H1 (cell line): ENCODE measurements at regions of chr19 and their contacts with region 1.

Region 1: GRCh38 chr19:10230861-10231611 is at the start of gene S1PR2:
- DNase-seq: peak in 1 of 2 experiments; percentile 87
- H3K4me3 ChIP-seq: peak within 1 kb of the TSS; percentile 61 to 88 (median 78)
- H3K27ac ChIP-seq: peak within 1 kb of the TSS; percentile 83
- H3K4me1 ChIP-seq: peaks cover 3 to 7% (median 3%) of the 10 kb centered on the region in 4 experiments; a peak in 4 of 7 replicates
- H3K27me3 ChIP-seq: 0 out of 7 replicates have a peak, but pooled peaks cover 0 to 3% (median 0%) of the 10 kb centered on the region in 4 experiments
- CTCF ChIP-seq: no peak
- EP300 ChIP-seq: no peak
- POLR2A ChIP-seq: peak; percentile 43 to 52
- RAD21 ChIP-seq: no peak
- total RNA-seq, gene S1PR2: 18.7 and 19.4 TPM in 2 replicates

Region 2: GRCh38 chr19:10122045-10122444 is 109.0 kb before region 1 on chr19:
- CTCF ChIA-PET with region 1: no interaction called
- POLR2A ChIA-PET with region 1: no interaction called
- DNase-seq: no peak
- H3K4me3 ChIP-seq: no peak overlapping the region
- H3K27ac ChIP-seq: no peak overlapping the region
- H3K4me1 ChIP-seq: peaks cover 0 to 7% (median 1%) of the 10 kb centered on the region in 4 experiments; a peak in 2 of 7 replicates
- H3K27me3 ChIP-seq: no peaks in the 10 kb centered on the region
- CTCF ChIP-seq: no peak
- EP300 ChIP-seq: no peak
- POLR2A ChIP-seq: no peak
- RAD21 ChIP-seq: no peak

Region 3: DNA sequence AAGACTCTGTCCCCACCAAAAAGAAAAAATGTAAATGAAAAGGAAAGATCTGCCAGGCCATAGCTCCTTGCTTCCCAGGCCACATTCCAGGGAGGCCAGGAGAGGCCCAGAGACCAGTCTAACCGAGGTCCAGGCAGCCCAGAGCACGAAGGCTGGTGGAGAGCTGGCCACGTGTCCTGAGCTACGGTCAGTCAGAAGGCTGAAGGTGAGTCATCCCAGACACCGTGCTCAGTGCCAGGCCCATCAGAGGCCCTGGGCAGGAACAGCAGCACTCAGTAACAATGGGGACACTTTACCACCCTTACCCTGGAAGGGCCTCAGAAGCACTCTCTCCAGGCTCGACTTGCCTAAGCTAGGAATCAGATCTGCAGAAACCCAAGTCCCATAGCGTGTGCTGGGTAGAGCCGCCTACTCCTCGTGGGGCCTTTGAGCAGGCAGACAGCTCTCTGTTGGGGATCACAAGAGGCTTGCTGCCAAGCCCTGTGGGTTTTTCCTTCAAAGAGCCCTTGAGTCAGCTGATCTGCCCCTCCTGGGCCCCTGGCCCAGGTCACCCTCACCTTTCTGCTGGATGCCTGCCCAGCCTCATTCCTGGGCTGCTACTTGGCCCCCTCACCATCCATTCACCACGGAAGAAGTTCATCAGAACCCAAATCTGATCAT is 24.7 kb before region 1 on chr19:
- CTCF ChIA-PET with region 1: interaction called, 59 read pairs
- POLR2A ChIA-PET with region 1: interaction called, 6 read pairs
- DNase-seq: no peak
- H3K4me3 ChIP-seq: no peak overlapping the region
- H3K27ac ChIP-seq: no peak overlapping the region
- H3K4me1 ChIP-seq: peaks cover 0 to 3% (median 0%) of the 10 kb centered on the region in 4 experiments; a peak in 1 of 7 replicates
- H3K27me3 ChIP-seq: no peaks in the 10 kb centered on the region
- CTCF ChIP-seq: no peak
- EP300 ChIP-seq: no peak
- POLR2A ChIP-seq: no peak
- RAD21 ChIP-seq: no peak

Region 4: DNA sequence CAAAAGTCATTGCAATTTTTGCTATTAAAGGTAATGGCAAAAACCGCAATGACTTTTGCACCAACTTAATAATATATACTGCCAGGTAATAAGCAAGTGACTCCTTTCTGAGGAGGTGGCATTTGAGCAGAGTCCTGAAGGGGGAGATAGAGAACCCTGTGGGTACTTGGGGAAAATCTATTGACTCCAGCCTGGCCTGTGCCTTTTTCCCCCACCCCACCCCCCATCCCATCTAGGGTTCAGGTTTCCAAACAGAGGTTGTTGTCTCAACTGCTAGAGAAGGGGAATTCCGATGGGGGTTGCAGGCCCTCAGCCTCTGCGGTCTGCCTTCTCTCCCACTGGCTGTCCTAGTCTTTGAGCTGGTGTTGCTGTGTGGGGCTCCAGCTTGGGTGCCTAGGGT is 11.4 kb before region 1 on chr19:
- CTCF ChIA-PET with region 1: interaction called, 51 read pairs
- POLR2A ChIA-PET with region 1: interaction called, 5 read pairs
- DNase-seq: peak in 1 of 2 experiments; percentile 46
- H3K4me3 ChIP-seq: no peak overlapping the region; a peak in 1 of 8 replicates
- H3K27ac ChIP-seq: peak overlapping the region; percentile 29; the same call in 1 of the 2 replicates
- H3K4me1 ChIP-seq: peaks cover 0 to 2% (median 0%) of the 10 kb centered on the region in 4 experiments; a peak in 2 of 7 replicates
- H3K27me3 ChIP-seq: no peaks in the 10 kb centered on the region
- CTCF ChIP-seq: peak; percentile 24 to 64 (median 56)
- EP300 ChIP-seq: peak; percentile 54 to 80; a peak in 2 of 3 replicates
- POLR2A ChIP-seq: peak in 1 of 2 experiments; percentile 63; a peak in 1 of 3 replicates
- RAD21 ChIP-seq: peak; percentile 38 to 55

Region 5: GRCh38 chr19:10245189-10245939 is 14.3 kb after region 1 on chr19:
- CTCF ChIA-PET with region 1: interaction called, 57 read pairs
- POLR2A ChIA-PET with region 1: interaction called, 9 read pairs
- DNase-seq: no peak
- H3K4me3 ChIP-seq: no peak overlapping the region
- H3K27ac ChIP-seq: no peak overlapping the region
- H3K4me1 ChIP-seq: peaks cover 0 to 7% (median 2%) of the 10 kb centered on the region in 4 experiments; a peak in 4 of 7 replicates
- H3K27me3 ChIP-seq: no peaks in the 10 kb centered on the region
- CTCF ChIP-seq: no peak
- EP300 ChIP-seq: no peak
- POLR2A ChIP-seq: no peak
- RAD21 ChIP-seq: no peak